H1 (cell line): ENCODE measurements at regions of chr3 and their contacts with region 1.

Region 1: DNA sequence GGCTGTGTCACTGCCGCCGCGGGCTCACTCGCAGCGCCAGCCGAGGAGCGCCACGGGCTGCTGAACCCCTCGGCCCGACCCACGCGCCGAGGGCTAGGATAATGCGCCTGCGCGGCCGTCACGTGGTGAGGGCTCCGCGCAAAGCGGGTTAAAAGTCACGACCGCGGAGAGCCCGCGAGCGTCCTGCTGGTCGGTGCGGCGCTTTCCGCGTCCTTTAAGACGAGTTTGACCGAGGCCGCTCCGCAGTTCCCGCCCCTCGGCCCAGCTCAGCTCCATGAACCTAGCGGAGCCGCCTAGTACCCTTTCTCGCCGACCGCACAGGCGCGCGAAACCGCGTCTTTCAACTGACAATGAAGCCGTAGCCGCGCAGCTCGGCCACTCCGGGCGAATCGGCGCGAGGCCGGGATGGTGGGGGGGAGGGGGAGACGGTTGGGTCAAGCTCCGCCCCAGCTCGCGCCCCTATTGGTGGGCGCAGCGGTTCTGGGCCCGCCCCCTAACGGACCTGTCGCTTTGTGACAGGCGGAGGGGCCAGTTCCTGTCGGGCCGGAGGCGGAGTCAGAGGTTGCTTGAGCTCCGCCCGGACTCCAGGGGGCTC is 636 bp upstream of the STT3B start:
- DNase-seq: peak; percentile 97 to 98
- H3K4me3 ChIP-seq: peak overlapping the region; percentile 70 to 95 (median 87)
- H3K27ac ChIP-seq: peak overlapping the region; percentile 97
- H3K4me1 ChIP-seq: peaks cover 0 to 10% (median 3%) of the 10 kb centered on the region in 4 experiments; a peak in 2 of 7 replicates
- H3K27me3 ChIP-seq: no peaks in the 10 kb centered on the region
- CTCF ChIP-seq: peak in 1 of 3 experiments; percentile 0; a peak in 1 of 4 replicates
- EP300 ChIP-seq: no peak
- POLR2A ChIP-seq: peak; percentile 96 to 98
- RAD21 ChIP-seq: no peak

Region 2: DNA sequence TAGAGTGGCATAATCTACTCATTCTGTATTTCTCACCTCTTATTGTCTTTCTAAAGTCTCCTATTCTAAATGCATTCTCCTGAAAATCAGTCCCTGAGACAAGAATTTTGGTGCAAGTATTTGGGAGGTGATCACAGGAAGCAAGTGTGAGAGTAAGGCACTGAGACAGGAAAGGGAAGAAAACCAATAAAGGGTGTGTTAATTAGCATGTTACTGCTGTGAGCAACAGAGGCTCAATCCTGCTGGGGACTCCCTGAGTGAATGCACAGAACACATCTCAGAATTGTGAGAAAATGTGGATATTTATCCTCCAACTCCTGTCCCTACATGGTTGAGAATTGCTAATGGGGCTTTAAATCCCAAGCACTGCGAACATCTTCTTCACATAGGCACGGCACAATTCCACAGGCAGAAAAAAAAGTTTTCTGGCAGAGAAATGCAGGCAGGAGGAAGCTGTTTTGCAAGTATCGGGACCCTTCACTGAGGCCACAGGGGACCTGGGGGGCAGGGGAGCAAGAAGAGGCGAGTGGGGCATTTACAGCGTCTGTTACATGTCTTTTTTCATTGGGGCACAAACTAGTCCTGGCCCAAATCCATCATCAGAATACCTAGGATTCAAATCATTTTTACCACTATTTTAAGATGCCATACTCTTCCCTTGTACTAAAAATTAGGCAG is 26.6 kb before region 1 on chr3:
- CTCF ChIA-PET with region 1: interaction called, 4 read pairs
- POLR2A ChIA-PET with region 1: interaction called, 12 read pairs
- DNase-seq: no peak
- H3K4me3 ChIP-seq: peak overlapping the region in 2 of 4 experiments; percentile 1 to 39; a peak in 2 of 8 replicates
- H3K27ac ChIP-seq: no peak overlapping the region
- H3K4me1 ChIP-seq: peaks cover 4 to 17% (median 11%) of the 10 kb centered on the region in 4 experiments; a peak in 6 of 7 replicates
- H3K27me3 ChIP-seq: peaks cover 0 to 1% (median 0%) of the 10 kb centered on the region in 4 experiments; a peak in 1 of 7 replicates
- CTCF ChIP-seq: no peak
- EP300 ChIP-seq: no peak
- POLR2A ChIP-seq: no peak
- RAD21 ChIP-seq: no peak

Region 3: DNA sequence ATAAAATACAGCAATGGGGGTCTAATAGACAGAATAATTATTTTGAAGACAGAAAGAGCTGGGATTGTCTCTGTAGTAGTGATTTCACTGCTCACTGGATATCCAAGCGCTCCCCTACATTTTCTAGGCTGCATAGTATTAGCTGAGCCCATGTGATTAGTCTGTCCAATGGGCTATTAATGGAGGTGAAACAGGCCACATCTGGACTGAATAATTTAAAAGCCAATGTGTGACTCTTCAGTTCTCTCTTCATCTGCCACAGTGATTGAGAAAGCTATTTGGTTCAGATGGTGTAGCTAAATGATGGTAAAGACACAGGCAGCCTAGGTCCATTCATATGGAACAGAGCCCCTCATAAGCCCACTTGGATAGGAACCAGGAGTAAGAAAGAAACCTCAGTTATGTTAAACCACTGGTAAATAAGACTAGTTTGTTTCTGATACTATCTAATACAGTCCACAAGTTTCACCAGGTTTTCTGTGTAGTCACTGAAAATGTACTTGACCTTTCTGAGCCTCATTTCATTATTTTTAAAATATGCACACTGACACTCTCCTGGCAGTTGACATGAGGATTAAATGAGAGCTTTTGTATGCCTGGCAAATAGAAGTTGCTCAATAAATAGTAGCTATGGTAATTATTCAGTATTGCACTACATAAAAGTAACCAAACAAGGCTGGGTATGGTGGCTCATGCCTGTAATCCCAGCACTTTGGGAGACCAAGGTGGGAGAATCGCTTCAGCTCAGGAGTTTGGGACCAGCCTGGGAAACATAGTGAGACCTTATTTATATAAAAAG is 16.4 kb before region 1 on chr3:
- CTCF ChIA-PET with region 1: interaction called, 5 read pairs
- POLR2A ChIA-PET with region 1: interaction called, 14 read pairs
- DNase-seq: no peak
- H3K4me3 ChIP-seq: no peak overlapping the region
- H3K27ac ChIP-seq: no peak overlapping the region
- H3K4me1 ChIP-seq: no peaks in the 10 kb centered on the region
- H3K27me3 ChIP-seq: no peaks in the 10 kb centered on the region
- CTCF ChIP-seq: no peak
- EP300 ChIP-seq: no peak
- POLR2A ChIP-seq: no peak
- RAD21 ChIP-seq: no peak

Region 4: GRCh38 chr3:31544634-31545033 is 12.5 kb after region 1 on chr3:
- CTCF ChIA-PET with region 1: interaction called, 12 read pairs
- POLR2A ChIA-PET with region 1: interaction called, 31 read pairs
- DNase-seq: no peak
- H3K4me3 ChIP-seq: no peak overlapping the region
- H3K27ac ChIP-seq: no peak overlapping the region
- H3K4me1 ChIP-seq: no peaks in the 10 kb centered on the region; a peak in 1 of 7 replicates
- H3K27me3 ChIP-seq: no peaks in the 10 kb centered on the region
- CTCF ChIP-seq: no peak
- EP300 ChIP-seq: no peak
- POLR2A ChIP-seq: no peak
- RAD21 ChIP-seq: no peak

Region 5: DNA sequence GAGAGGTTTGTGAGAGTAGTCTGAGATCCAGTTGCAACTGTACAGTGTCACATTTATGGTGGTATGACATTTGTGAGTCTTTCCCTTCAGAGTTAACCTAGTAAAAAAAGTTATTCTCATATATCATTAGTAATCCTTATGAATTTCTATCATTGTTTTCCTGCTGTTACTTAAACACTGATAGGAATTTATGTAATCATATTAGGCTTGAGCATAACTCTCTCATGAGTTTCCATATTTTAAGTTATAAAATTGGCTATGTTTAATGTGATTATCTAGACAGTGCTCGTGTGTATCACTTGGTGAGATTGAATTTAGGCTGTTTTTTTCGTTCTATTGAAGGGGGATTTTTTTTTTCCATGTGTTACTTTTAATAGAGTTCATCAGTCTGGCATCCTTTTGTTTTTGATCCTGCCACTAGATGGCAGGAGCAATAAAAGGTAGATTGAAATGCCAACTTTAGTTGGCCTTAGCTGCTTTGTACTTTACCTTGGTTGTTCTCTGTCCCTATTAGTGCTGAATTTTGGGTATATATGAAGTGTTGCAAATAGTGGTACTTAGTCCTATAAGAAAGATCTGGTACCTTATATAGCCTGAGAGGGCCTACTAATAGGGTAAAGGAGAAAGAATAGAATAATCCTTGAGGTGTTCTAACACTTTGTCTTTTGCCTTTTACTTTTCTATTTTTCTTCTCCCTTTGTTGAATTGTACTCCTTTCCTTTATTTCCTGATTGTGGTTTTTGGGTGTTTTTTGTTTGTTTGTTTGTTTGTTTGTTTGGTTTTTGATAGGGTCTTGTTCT is 18.6 kb after region 1 on chr3:
- CTCF ChIA-PET with region 1: interaction called, 12 read pairs
- POLR2A ChIA-PET with region 1: interaction called, 31 read pairs
- DNase-seq: no peak
- H3K4me3 ChIP-seq: no peak overlapping the region
- H3K27ac ChIP-seq: no peak overlapping the region
- H3K4me1 ChIP-seq: no peaks in the 10 kb centered on the region; a peak in 1 of 7 replicates
- H3K27me3 ChIP-seq: no peaks in the 10 kb centered on the region
- CTCF ChIP-seq: peak in 2 of 3 experiments; percentile 29 to 52; a peak in 2 of 4 replicates
- EP300 ChIP-seq: no peak
- POLR2A ChIP-seq: no peak
- RAD21 ChIP-seq: peak; percentile 29 to 43

Region 6: DNA sequence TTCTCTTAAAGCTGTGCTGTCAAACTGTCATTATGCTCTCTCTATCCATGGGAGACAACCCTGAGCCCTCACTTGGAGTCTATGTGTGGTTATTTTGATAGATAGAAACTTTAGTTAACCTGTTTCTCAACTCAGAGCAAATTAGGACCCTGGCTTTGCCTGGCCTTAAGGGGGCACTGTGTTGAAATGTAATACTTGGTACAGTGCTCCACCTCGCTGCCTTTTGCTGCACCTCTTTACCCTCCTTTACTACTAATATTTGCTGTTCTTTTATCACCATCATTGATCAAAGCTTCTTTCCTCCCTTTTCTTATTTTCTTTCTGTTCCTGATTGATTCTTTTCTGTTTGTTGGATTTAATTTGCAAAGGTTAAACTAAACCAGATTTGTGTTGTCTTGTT is 34.9 kb after region 1 on chr3:
- CTCF ChIA-PET with region 1: interaction called, 16 read pairs
- POLR2A ChIA-PET with region 1: interaction called, 21 read pairs
- DNase-seq: no peak
- H3K4me3 ChIP-seq: no peak overlapping the region
- H3K27ac ChIP-seq: no peak overlapping the region
- H3K4me1 ChIP-seq: peaks cover 5 to 11% (median 7%) of the 10 kb centered on the region in 4 experiments
- H3K27me3 ChIP-seq: no peaks in the 10 kb centered on the region
- CTCF ChIP-seq: peak; percentile 35 to 97 (median 81)
- EP300 ChIP-seq: no peak
- POLR2A ChIP-seq: no peak
- RAD21 ChIP-seq: peak; percentile 47; a peak in 3 of 4 replicates

Region 7: DNA sequence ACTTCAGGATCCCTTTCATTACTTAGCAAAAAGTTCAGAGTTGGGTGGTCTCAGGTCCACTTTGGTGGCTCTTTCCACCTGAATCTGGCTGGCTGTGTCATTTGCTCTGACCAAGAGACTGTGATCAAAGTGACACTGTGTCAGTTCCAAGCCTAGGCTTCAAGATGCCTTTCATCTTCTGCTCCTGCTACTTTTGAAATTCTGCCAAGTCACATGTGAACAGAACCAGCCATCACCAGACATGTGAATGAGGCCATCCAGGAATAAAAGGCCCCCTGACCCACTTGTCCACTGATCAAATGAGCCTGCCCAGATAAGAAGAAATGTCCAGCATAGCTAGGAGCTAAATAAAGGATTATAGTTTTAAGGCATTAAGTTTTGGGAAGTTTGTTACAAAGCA is 316.8 kb after region 1 on chr3:
- CTCF ChIA-PET with region 1: no interaction called
- POLR2A ChIA-PET with region 1: no interaction called
- DNase-seq: no peak
- H3K4me3 ChIP-seq: no peak overlapping the region
- H3K27ac ChIP-seq: no peak overlapping the region
- H3K4me1 ChIP-seq: peaks cover 0 to 8% (median 2%) of the 10 kb centered on the region in 4 experiments; a peak in 3 of 7 replicates
- H3K27me3 ChIP-seq: no peaks in the 10 kb centered on the region
- CTCF ChIP-seq: no peak
- EP300 ChIP-seq: no peak
- POLR2A ChIP-seq: no peak
- RAD21 ChIP-seq: no peak